Naive thymus-derived CD4-positive, alpha-beta T cell (primary cell): ENCODE measurements at regions of chr6 and their contacts with region 1.

Region 1: GRCh38 chr6:151390276-151391032 is 905 bp downstream of the ZBTB2 start:
- DNase-seq: peak; percentile 97 to 100 (median 99)
- ATAC-seq: peak; percentile 88
- H3K4me3 ChIP-seq: peak overlapping the region; percentile 60
- H3K4me3 Mint-ChIP-seq: peak overlapping the region; percentile 68 to 99 (median 94)
- H3K27ac ChIP-seq: peak overlapping the region; percentile 96
- H3K27ac Mint-ChIP-seq: peak overlapping the region; percentile 51 to 98 (median 94)
- H3K4me1 ChIP-seq: peaks cover 44 to 45% of the 10 kb centered on the region in 2 donors
- H3K4me1 Mint-ChIP-seq: peaks cover 39 to 74% (median 67%) of the 10 kb centered on the region in 7 donors
- H3K27me3 ChIP-seq: no peaks in the 10 kb centered on the region
- H3K27me3 Mint-ChIP-seq: peaks cover 0 to 4% (median 0%) of the 10 kb centered on the region in 5 donors

Region 2: GRCh38 chr6:149565527-149566409 is 1824.7 kb before region 1 on chr6 and contains the start of gene GINM1:
- CTCF ChIA-PET with region 1: no interaction called
- POLR2A ChIA-PET with region 1: no interaction called
- intact Hi-C with region 1: loop called (anchors 5 kb)
- DNase-seq: peak; percentile 92 to 99 (median 96)
- ATAC-seq: peak; percentile 94
- H3K4me3 ChIP-seq: peak within 1 kb of the TSS; percentile 89
- H3K4me3 Mint-ChIP-seq: peak within 1 kb of the TSS; percentile 93 to 99 (median 97)
- H3K27ac ChIP-seq: peak within 1 kb of the TSS; percentile 95
- H3K27ac Mint-ChIP-seq: peak within 1 kb of the TSS; percentile 87 to 97 (median 97)
- H3K4me1 ChIP-seq: peaks cover 0 to 6% of the 10 kb centered on the region in 2 donors
- H3K4me1 Mint-ChIP-seq: peaks cover 3 to 39% (median 19%) of the 10 kb centered on the region in 7 donors
- H3K27me3 ChIP-seq: no peaks in the 10 kb centered on the region
- H3K27me3 Mint-ChIP-seq: peaks cover 0 to 7% (median 0%) of the 10 kb centered on the region in 5 donors
- total RNA-seq, gene GINM1: 14.4 to 27.3 (median 19.9) TPM

Region 3: GRCh38 chr6:150865406-150866146 is 524.9 kb before region 1 on chr6 and contains the start of gene MTHFD1L:
- CTCF ChIA-PET with region 1: no interaction called
- POLR2A ChIA-PET with region 1: no interaction called
- intact Hi-C with region 1: loop called (anchors 1 kb)
- DNase-seq: peak; percentile 46 to 84 (median 55)
- ATAC-seq: peak; percentile 83
- H3K4me3 ChIP-seq: peak within 1 kb of the TSS; percentile 72
- H3K4me3 Mint-ChIP-seq: peak within 1 kb of the TSS; percentile 83 to 97 (median 88)
- H3K27ac ChIP-seq: peak within 1 kb of the TSS; percentile 61
- H3K27ac Mint-ChIP-seq: peak within 1 kb of the TSS in 8 of 9 donors; percentile 28 to 89 (median 70)
- H3K4me1 ChIP-seq: peaks cover 5 to 6% of the 10 kb centered on the region in 2 donors
- H3K4me1 Mint-ChIP-seq: peaks cover 10 to 44% (median 14%) of the 10 kb centered on the region in 7 donors
- H3K27me3 ChIP-seq: no peaks in the 10 kb centered on the region
- H3K27me3 Mint-ChIP-seq: peaks cover 8 to 18% (median 16%) of the 10 kb centered on the region in 5 donors
- total RNA-seq, gene MTHFD1L: 6.4 to 57.8 (median 9.3) TPM

Region 4: DNA sequence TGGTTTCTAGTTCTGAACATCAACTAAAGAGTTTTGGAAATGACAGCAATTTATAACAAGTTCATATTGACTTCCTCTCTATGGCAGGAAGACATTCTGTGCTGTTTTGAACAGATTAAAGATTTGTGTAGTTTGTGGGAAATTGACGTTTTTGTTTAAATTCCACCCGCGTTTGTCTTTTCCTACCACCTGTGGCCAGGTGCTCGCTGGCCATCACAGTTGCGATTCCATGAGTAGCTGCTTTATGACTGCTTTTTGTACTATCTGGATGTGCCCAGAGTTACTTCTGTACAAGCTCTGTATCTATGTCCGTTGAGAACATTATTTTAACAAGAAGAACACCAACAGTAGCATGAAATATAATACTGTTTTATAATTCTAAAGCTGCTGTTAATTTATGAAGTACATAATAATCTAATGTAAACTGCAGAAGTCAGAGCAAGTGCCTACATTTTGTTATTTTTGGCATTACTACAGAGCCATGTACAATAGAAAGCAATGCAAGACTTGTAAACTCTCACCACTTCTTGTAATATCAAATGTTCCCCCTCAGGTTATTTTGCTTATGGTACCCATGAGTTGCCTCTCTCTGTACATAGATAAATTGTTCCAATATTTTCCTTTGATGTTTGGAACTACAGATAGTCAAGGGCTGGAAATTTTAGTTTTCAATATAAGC is 32.6 kb before region 1 on chr6:
- CTCF ChIA-PET with region 1: no interaction called
- POLR2A ChIA-PET with region 1: interaction called, 19 read pairs
- intact Hi-C with region 1: no loop called
- DNase-seq: no peak
- ATAC-seq: no peak
- H3K4me3 ChIP-seq: no peak overlapping the region
- H3K4me3 Mint-ChIP-seq: peak overlapping the region in 1 of 10 donors; percentile 11
- H3K27ac ChIP-seq: no peak overlapping the region
- H3K27ac Mint-ChIP-seq: peak overlapping the region in 7 of 9 donors; percentile 4 to 65 (median 49)
- H3K4me1 ChIP-seq: no peaks in the 10 kb centered on the region
- H3K4me1 Mint-ChIP-seq: peaks cover 0 to 13% (median 12%) of the 10 kb centered on the region in 7 donors
- H3K27me3 ChIP-seq: no peaks in the 10 kb centered on the region
- H3K27me3 Mint-ChIP-seq: no peaks in the 10 kb centered on the region

Region 5: DNA sequence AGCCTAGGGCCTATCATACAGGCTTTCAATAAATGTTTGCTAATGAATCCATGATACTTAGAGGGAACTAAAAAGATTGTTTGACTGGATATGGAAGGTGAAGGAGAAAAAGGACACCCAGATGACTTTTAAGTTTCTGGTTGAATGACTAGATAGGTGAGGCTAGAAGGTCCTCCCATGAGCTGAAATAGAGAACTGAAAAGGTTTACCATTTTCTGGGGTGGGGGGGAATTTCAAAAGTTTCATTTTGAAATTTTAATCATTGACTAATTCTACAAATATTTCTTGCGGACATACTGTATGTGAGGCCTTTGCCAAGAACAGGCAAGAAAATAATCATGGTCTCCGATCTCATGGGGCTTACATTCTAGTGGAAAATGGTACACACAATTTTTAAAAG is 18.8 kb after region 1 on chr6:
- CTCF ChIA-PET with region 1: interaction called, 7 read pairs
- POLR2A ChIA-PET with region 1: interaction called, 24 read pairs
- intact Hi-C with region 1: loop called (anchors 1 to 2 kb)
- DNase-seq: no peak
- ATAC-seq: no peak
- H3K4me3 ChIP-seq: no peak overlapping the region
- H3K4me3 Mint-ChIP-seq: no peak overlapping the region
- H3K27ac ChIP-seq: no peak overlapping the region
- H3K27ac Mint-ChIP-seq: peak overlapping the region in 7 of 9 donors; percentile 1 to 70 (median 37)
- H3K4me1 ChIP-seq: peaks cover 12 to 14% of the 10 kb centered on the region in 2 donors
- H3K4me1 Mint-ChIP-seq: peaks cover 20 to 38% (median 32%) of the 10 kb centered on the region in 7 donors
- H3K27me3 ChIP-seq: no peaks in the 10 kb centered on the region
- H3K27me3 Mint-ChIP-seq: no peaks in the 10 kb centered on the region

Region 6: DNA sequence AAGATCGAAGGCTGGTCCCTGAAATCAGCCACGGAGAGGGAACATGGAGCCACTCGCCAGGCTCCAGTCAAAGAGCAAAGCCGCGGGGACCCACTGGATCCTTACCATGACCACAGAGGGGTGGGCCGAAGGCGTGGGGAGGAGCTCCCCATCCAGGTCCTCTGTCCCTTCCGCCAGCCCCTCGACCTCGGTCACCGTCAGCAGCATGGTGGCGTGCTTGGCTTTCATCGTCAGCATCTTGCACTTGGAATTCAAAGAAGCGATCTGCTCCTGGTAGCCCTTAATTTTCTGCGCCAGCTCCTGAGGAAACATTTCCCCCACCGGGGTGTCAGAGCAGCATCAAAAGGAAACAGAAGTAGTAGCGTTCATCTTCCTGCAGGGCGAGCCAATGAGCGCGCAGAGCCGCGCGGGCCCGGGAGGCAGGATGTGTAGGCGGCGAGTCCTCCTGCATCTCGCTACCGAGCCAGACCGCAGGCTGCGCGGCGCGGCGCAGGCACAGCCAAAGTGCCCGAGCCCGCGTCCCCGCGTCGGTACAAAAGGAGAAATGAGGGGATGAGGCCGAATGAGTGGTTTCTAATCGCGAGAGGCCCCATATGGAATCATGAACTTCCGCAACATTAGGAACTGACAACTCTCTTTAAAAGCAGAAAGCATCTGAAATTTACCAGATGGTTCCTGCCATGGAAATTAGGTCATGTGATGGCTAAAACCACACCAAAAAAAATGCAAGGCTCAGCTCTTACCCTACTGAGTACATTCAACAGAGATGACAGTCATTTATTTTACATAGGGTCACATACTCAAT is 911.5 kb after region 1 on chr6:
- CTCF ChIA-PET with region 1: no interaction called
- POLR2A ChIA-PET with region 1: interaction called, 7 read pairs
- intact Hi-C with region 1: loop called (anchors 1 kb)
- DNase-seq: peak; percentile 76 to 91 (median 87)
- ATAC-seq: peak; percentile 98
- H3K4me3 ChIP-seq: peak overlapping the region; percentile 84
- H3K4me3 Mint-ChIP-seq: peak overlapping the region; percentile 87 to 100 (median 100)
- H3K27ac ChIP-seq: peak overlapping the region; percentile 85
- H3K27ac Mint-ChIP-seq: peak overlapping the region; percentile 92 to 100 (median 99)
- H3K4me1 ChIP-seq: peaks cover 12 to 14% of the 10 kb centered on the region in 2 donors
- H3K4me1 Mint-ChIP-seq: peaks cover 22 to 49% (median 40%) of the 10 kb centered on the region in 7 donors
- H3K27me3 ChIP-seq: no peaks in the 10 kb centered on the region
- H3K27me3 Mint-ChIP-seq: no peaks in the 10 kb centered on the region